ENCODE measurements at regions of chr10 and their contacts with region 1.

Region 1: GRCh38 chr10:112000466-112000865 is 183.1 kb downstream of the GPAM start:
- DNase-seq: peak in 1 of 2 donors; percentile 69
- H3K4me3 ChIP-seq: no peak overlapping the region
- H3K27ac ChIP-seq: no peak overlapping the region
- H3K4me1 ChIP-seq: peaks cover 0 to 4% of the 10 kb centered on the region in 2 donors
- H3K27me3 ChIP-seq: no peaks in the 10 kb centered on the region
- CTCF ChIP-seq: no peak

Region 2: GRCh38 chr10:111986079-111986478 is 14.4 kb before region 1 on chr10:
- intact Hi-C with region 1: loop called (anchors 1 kb)
- DNase-seq: no peak
- H3K4me3 ChIP-seq: no peak overlapping the region
- H3K27ac ChIP-seq: peak overlapping the region; percentile 54 to 70
- H3K4me1 ChIP-seq: no peaks in the 10 kb centered on the region
- H3K27me3 ChIP-seq: no peaks in the 10 kb centered on the region
- CTCF ChIP-seq: no peak